HEK293T (cell line): ENCODE measurements at regions of chr1 and their contacts with region 1.

Region 1: GRCh38 chr1:44819608-44820327 is 11.4 kb downstream of the BTBD19 start:
- DNase-seq: peak; percentile 85

Region 2: DNA sequence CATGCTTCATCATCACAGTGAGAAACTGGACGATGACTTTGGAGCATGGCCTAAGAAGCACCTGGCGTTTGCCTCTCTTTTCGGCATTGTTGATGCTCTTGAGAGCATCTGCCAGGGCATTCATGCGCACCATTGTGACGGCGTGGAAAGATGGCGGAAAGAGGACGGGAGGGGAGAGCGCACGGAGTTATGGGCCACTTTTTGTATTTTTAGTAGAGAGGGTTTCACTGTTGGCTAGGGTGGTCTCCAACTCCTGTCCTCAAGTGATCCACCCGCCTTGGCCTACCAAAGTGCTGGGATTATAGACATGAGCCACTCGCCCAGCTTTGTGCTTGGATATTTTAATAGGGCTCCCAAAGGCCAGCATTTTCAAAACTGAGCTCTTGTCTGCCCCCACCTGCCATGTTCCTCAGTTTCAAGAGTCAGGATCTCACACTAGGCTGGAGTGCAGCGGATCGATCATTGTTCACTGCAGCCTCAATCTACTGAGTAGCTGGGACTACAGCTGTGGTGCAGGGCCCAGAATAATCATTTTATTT is 39.1 kb before region 1 on chr1:
- CTCF ChIA-PET with region 1: no interaction called
- POLR2A ChIA-PET with region 1: interaction called, 10 read pairs
- DNase-seq: no peak

Region 3: DNA sequence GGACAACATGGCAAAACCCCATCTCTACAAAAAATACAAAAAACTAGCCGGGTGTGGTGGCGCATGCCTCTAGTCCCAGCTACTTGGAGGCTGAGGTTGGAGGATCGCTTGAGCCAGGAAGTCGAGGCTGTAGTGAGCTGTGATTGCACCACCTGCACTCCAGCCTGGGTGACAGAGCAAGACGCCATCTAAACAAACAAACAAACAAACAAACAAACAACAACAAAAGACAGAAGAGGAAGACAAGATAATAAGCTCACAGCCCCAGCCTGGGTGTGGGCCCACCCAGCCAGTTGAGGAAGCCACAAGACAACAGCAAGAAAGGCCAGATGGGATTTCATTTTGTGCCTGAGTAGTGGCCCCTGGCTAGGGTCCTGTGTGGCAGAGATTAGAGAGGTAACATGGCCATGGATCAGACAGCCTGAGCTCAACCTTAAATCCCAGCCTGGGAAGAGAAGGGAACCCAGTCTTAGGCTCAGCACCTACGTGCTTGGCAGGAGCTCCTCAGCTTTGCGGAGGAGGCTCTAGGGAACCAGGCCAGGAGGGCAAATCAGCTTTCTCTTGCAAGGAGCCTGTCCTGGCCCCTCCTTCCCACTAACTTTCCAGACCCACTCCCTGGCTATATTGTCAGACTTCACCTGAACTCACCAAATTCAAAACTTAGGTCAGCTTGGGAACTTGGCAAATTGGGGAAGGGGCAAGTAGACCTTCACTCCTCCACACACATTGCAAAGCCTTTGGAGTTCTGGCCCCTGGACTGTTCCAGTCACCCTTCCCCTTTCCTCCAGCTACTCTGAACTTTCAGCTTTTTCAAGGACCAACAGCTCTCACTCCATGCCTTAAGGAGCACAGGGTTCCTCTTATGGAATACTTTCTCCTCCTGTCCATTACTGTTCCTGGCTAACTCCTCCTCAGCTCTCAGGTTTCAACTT is 26.7 kb before region 1 on chr1:
- CTCF ChIA-PET with region 1: interaction called, 8 read pairs
- POLR2A ChIA-PET with region 1: interaction called, 21 read pairs
- DNase-seq: no peak

Region 4: DNA sequence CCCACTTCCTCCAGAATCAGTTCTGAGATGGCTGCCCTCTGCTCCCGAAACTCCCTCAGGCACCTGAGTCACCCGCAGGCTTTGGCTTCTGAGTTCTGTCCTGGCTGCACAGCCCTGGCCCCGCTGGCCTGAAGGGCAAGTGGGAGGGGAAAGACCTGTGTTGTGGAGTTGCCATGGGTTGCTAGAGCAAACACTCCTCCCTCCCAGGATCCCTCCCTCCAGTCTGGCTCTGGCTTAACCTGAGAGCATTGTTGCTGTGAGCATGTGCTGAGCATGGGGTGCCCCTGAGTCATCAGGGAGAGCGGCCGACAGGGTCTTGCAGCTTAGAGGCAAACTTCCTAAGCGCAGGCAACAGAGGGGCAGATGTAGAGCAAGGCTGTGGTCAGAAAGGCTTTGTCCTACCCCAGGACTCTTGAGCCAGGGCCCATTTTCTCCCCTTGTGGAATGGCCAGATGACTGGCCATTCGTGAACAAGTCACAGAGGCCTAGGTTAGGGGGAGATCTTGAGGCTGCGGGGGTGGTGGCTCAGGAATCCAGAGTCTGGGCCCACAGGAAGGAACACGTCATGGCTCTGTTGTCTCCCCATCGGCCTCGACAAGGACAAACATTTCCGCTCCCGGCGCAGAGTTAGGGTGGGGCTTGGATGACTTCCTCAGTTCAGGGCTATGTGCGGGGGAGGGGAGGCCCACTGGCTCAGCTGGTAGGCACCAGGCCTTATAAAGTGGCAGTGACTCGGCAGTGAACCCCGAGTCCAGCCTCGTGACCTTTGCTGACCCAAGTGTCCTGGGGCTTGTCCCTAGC is 12.3 kb before region 1 on chr1 and contains the start of gene DYNLT4:
- CTCF ChIA-PET with region 1: interaction called, 4 read pairs
- POLR2A ChIA-PET with region 1: interaction called, 137 read pairs
- DNase-seq: no peak

Region 5: DNA sequence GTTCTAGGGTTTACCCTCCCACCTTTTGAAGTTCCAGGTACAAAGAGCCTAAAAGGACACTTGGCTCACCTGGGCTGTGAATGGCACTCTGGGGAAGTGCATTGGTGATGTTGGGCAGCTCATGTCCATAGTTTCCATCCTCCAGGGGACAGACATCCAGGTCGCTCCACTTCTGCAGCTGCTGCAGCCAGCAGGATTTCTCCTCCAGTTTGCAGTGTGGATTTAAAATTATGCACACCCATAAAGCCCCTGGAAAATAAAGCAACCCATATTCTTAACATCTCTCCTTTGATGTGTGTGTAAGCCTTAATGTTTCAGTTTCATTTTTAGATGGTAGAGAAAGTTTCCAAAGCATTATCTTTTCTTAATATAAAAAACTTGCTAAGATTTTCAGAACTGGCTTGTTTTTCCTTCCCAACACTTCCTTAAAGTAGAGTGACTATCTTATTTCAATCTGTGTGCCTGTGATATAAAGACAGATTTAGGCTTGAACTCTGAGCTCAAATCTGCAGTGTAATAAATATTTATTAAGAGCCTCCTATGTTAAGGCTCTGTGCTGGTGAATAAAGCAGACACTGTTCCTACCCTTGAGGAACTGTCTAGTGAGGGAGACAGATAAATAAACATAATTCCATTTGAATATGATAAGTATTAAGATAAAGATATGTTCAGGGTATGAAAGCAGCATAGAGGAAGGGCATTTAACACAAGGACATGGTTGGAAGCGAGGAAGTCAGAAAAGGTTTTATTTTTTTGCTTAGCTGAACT is 231.4 kb after region 1 on chr1:
- CTCF ChIA-PET with region 1: no interaction called
- POLR2A ChIA-PET with region 1: no interaction called
- DNase-seq: no peak